Heart right ventricle (tissue), 16 donors: ENCODE measurements at regions of chr1 and their contacts with region 1.

Region 1: GRCh38 chr1:1574721-1575537 is at the start of gene SSU72:
- DNase-seq: peak; percentile 92 to 94
- ATAC-seq: peak; percentile 91 to 97 (median 96)
- H3K4me3 ChIP-seq: peak within 1 kb of the TSS; percentile 84 to 100 (median 96)
- H3K27ac ChIP-seq: peak within 1 kb of the TSS; percentile 97 to 100 (median 99)
- H3K4me1 ChIP-seq: peaks cover 3 to 49% (median 41%) of the 10 kb centered on the region in 9 donors
- H3K27me3 ChIP-seq: peaks cover 0 to 11% (median 0%) of the 10 kb centered on the region in 7 donors
- CTCF ChIP-seq: no peak
- total RNA-seq, gene SSU72: 73.8 to 138 (median 77.9) TPM

Region 2: DNA sequence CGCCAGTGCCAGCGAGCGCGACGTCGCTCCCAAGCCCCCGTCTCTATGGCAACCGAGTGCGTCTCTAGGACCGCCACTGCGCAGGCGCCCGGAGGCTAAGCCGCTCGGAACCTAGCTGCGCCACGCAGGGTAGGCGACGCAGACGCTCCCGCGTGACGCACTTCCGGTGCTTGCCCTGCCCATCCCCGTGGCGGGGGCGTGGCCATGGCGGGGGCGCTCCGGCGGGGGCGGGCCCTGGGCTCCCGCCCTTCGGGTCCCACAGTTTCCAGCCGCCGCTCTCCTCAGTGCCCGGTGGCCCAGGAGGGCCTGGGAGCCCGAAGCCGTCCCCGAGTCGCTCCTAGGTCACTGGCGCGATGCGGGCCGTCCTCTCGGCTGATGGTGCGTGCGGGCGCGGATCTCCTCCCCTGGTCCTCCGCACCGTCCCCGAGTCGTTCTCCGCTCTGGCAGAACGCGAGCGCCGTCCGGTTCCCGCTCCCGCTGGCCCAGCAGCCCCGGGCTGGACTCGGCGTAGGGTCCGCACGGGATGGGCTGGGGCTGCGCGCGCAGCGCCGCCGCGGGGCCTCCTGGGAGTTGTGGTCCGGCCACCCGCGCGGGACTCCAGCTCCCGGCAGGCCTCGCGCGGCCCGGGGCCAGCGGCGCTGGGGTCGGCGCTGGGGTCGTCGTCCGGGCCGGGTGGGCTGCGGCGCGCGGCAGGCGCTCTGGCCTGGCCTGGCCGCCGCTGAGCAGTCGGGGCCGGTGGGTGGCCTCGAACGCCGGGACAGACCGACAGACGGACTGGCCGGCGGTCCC is 40.5 kb after region 1 on chr1 and contains the start of gene MIB2:
- intact Hi-C with region 1: loop called in 5 of 10 experiments (anchors 2 to 5 kb)
- DNase-seq: peak; percentile 93 to 97
- ATAC-seq: peak; percentile 94 to 97 (median 96)
- H3K4me3 ChIP-seq: peak within 1 kb of the TSS; percentile 89 to 100 (median 97)
- H3K27ac ChIP-seq: peak within 1 kb of the TSS; percentile 98 to 100 (median 100)
- H3K4me1 ChIP-seq: peaks cover 7 to 54% (median 41%) of the 10 kb centered on the region in 9 donors
- H3K27me3 ChIP-seq: no peaks in the 10 kb centered on the region
- CTCF ChIP-seq: no peak
- total RNA-seq, gene MIB2: 53.6 to 110 (median 74.7) TPM

Region 3: GRCh38 chr1:1721201-1721600 is 146.3 kb after region 1 on chr1:
- intact Hi-C with region 1: loop called in 1 of 10 experiments (anchors 10 kb)
- DNase-seq: no peak
- ATAC-seq: no peak
- H3K4me3 ChIP-seq: no peak overlapping the region
- H3K27ac ChIP-seq: no peak overlapping the region
- H3K4me1 ChIP-seq: peaks cover 0 to 13% (median 4%) of the 10 kb centered on the region in 9 donors
- H3K27me3 ChIP-seq: no peaks in the 10 kb centered on the region
- CTCF ChIP-seq: no peak